ENCODE measurements at regions of chr6 and their contacts with region 1.

Region 1: GRCh38 chr6:7725849-7726415 is at the start of gene BMP6:
- DNase-seq: peak; percentile 75 to 96 (median 91)

Region 2: DNA sequence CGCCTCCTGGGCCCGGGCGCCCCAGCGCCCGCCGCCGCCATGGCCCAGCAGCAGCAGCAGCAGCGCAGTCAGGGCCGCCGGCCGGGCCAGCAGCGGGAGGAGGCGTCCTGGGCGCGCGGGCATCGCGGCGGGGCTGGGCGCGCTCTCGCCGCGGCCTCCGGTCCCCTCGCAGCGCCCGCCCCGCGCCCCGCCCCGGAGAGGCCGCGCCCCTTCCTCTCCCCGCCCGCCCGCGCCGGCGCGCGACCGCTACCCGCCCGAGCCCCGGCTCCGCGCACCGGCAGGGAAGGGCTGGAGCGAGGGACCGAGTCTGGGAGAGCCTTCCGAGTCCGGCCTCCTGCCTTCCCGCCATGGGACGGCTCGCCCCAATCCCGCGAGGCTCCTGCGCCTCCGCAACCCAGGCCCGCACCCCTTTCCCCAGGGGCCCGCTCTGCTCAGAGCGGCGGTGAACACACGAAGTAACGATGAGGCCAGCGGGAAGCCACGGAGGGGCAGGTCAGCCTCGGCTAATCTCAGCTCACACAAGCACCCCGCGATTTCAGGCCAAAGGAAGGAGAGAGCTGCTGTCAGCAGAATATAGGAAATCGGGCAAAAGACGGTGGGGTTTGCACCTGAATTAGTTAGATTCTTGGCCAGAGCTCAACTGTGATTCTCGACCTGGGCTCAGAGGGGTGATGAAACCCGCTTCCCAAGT is 184.9 kb after region 1 on chr6 and contains the start of gene TXNDC5:
- intact Hi-C with region 1: loop called (anchors 5 kb)
- DNase-seq: peak in 41 of 42 donors; percentile 47 to 93 (median 86)

Region 3: DNA sequence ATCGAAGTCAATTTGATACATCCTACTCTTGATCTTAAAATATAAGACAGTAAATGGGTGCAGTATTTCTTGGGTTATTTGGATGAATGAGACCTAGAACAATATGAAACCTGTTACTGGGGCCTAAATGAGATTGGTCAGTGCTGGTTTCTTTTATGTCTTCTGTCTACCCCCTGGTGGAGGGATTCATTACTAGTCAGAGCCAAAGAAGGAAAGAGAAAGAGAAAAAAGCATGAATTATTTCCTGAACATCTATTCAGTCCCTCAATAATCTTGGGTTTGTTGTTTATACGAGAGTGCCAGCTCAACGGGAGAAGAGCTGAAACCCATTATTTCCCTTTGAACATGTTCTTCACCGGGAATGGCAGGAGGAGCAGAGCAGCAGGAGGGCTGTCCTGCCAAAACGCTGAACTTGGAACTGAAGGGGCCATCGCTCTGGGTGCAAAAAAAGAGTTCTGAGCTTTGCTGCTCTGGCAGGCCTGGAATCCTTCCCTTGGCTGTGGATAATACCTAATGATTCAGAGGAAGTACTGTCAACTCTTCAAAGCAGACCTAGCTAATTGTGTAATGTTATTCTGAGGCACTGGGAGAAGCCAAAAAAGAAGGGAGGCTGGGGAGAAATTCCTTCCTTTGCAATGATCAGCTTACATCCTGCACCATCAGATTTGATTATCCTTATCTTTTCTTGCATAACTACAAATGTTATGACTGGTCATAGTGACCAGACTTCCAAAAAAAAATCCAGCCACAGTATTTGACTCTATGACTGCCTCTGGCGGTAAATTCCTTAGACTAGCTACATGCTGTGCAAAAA is 266.3 kb after region 1 on chr6:
- intact Hi-C with region 1: loop called (anchors 5 kb)
- DNase-seq: peak in 11 of 42 donors; percentile 10 to 57 (median 25)

Region 4: GRCh38 chr6:8063761-8064637 is 338.1 kb after region 1 on chr6 and contains the start of gene BLOC1S5:
- intact Hi-C with region 1: loop called (anchors 5 kb)
- DNase-seq: peak; percentile 90 to 98 (median 96)

Measured in head of caudate nucleus (tissue), 42 donors.